ENCODE measurements at regions of chr17 and their contacts with region 1.

Region 1: DNA sequence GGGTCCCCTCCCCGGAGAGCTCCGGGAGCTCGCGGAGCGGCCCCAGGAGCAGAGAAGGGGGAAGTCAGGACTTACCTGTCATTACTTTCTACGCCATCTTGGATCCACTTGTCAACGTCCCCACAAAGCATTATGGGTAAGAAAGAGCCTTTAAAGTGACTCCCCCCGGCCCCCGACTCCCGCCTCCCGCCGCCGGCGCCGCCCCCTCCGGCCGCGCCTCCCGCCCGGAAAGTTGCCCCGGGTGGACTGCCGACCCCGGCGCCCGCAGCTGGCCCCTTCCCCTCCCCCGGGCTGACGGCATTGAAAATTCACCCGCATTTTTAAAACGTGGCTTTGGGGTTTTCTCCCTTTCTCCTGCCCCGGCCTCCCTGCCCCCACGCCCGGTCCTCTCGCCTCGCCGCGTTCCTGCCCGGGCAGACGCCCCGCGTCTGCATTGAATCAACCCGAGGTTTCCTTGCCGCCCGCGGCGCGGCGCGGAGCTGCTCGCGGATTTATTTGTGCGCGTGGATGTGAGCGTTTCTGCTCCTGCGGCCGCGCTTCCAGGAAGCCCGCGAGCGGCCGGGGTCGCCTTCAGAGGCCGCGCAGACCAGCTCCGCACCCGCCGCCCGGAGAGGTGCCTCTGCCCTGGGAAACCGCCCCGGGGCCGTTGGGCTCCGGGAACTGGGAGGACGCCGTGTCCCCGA is at the start of gene HELZ:
- DNase-seq: peak; percentile 44 to 90 (median 67)
- ATAC-seq: peak; percentile 67
- H3K4me3 ChIP-seq: peak within 1 kb of the TSS; percentile 78 to 84
- H3K4me3 Mint-ChIP-seq: peak within 1 kb of the TSS; percentile 90
- H3K27ac ChIP-seq: peak within 1 kb of the TSS; percentile 71 to 77
- H3K27ac Mint-ChIP-seq: peak within 1 kb of the TSS; percentile 89
- H3K4me1 ChIP-seq: peaks cover 35% of the 10 kb centered on the region
- H3K4me1 Mint-ChIP-seq: peaks cover 52% of the 10 kb centered on the region
- H3K27me3 ChIP-seq: peaks cover 0 to 2% of the 10 kb centered on the region in 2 experiments
- H3K27me3 Mint-ChIP-seq: no peaks in the 10 kb centered on the region
- CTCF ChIP-seq: no peak
- total RNA-seq, gene HELZ: 108 to 116 TPM

Region 2: DNA sequence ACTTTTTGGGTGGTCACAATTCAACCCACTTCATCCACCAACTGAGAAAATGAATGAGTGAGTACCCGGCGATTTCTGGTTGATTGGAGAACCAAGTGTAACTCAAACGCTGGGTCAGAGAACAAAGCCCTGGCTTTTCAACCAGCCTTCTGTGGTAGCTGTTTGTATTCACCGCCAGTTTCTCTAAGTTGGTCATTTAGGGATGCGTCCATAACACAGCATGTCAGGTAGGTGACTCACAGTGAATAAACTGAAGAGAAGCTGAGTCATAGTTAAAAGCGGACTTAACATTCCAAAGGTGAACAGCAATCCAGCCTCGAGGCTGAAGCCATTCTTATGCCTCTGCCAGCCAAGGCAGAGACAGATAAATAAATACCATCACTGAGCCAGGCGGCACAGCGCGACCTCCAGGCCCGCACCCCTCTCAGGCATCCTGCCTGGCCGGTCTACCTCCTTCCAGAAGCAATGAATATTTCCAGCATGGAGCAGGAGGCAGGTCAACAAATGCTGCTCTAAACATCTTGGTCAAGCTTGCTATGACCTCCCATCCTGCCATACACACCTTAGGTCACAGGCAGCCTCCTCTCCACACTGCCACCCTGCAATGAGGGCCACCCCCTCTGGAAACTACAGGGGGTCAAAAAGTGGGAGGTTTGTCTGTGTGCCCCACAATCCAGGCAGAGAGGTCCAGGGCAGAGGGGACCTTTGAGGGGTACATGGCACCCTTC is 293.1 kb before region 1 on chr17:
- CTCF ChIA-PET with region 1: no interaction called
- POLR2A ChIA-PET with region 1: no interaction called
- intact Hi-C with region 1: no loop called
- DNase-seq: no peak
- ATAC-seq: no peak
- H3K4me3 ChIP-seq: no peak overlapping the region
- H3K4me3 Mint-ChIP-seq: no peak overlapping the region
- H3K27ac ChIP-seq: no peak overlapping the region
- H3K27ac Mint-ChIP-seq: no peak overlapping the region
- H3K4me1 ChIP-seq: no peaks in the 10 kb centered on the region
- H3K4me1 Mint-ChIP-seq: no peaks in the 10 kb centered on the region
- H3K27me3 ChIP-seq: no peaks in the 10 kb centered on the region
- H3K27me3 Mint-ChIP-seq: peaks cover 17% of the 10 kb centered on the region
- CTCF ChIP-seq: no peak

Region 3: GRCh38 chr17:67121316-67121887 is 123.8 kb before region 1 on chr17:
- CTCF ChIA-PET with region 1: no interaction called
- POLR2A ChIA-PET with region 1: no interaction called
- intact Hi-C with region 1: no loop called
- DNase-seq: no peak
- ATAC-seq: no peak
- H3K4me3 ChIP-seq: no peak overlapping the region
- H3K4me3 Mint-ChIP-seq: no peak overlapping the region
- H3K27ac ChIP-seq: no peak overlapping the region
- H3K27ac Mint-ChIP-seq: no peak overlapping the region
- H3K4me1 ChIP-seq: no peaks in the 10 kb centered on the region
- H3K4me1 Mint-ChIP-seq: peaks cover 6% of the 10 kb centered on the region
- H3K27me3 ChIP-seq: no peaks in the 10 kb centered on the region
- H3K27me3 Mint-ChIP-seq: no peaks in the 10 kb centered on the region
- CTCF ChIP-seq: no peak

Region 4: DNA sequence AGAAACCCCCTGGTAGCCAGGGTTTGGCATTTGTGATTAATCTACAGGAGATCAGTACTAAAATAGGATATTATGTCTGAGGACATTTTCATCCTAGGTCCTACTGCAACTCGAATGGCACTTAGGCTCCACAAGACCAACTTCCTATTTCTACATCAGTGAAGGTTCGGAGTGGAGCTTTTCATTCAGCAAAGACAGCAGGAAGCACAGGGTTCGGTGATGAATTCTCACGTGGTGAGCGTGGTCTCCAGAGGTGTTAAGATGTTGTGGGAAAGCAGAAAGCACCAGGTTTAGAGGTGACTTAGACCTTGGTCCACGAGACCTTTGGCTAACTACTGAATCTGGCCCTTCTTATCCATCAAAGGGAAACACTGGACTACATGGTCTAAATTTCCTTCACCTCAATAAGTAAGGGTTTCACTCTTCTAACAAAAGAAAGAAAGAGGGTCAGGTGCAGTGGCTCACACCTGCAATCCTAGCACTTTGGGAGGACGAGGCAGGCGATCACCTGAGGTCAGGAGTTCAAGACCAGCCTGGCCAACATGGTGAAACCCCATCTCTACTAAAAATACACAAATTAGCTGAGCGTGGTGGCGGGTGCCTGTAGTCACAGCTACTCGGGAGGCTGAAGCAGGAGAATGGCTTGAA is 13.7 kb after region 1 on chr17:
- CTCF ChIA-PET with region 1: interaction called, 3 read pairs
- POLR2A ChIA-PET with region 1: interaction called, 4 read pairs
- intact Hi-C with region 1: loop called in 1 of 2 experiments (anchors 2 kb)
- DNase-seq: peak in 8 of 9 experiments; percentile 21 to 84 (median 52)
- ATAC-seq: peak; percentile 53
- H3K4me3 ChIP-seq: peak overlapping the region in 1 of 2 experiments; percentile 19
- H3K4me3 Mint-ChIP-seq: peak overlapping the region; percentile 64
- H3K27ac ChIP-seq: peak overlapping the region in 1 of 2 experiments; percentile 62
- H3K27ac Mint-ChIP-seq: peak overlapping the region; percentile 77
- H3K4me1 ChIP-seq: peaks cover 16% of the 10 kb centered on the region
- H3K4me1 Mint-ChIP-seq: peaks cover 20% of the 10 kb centered on the region
- H3K27me3 ChIP-seq: no peaks in the 10 kb centered on the region
- H3K27me3 Mint-ChIP-seq: no peaks in the 10 kb centered on the region
- CTCF ChIP-seq: no peak

Region 5: GRCh38 chr17:67359960-67360773 is 115.0 kb after region 1 on chr17:
- CTCF ChIA-PET with region 1: no interaction called
- POLR2A ChIA-PET with region 1: no interaction called
- intact Hi-C with region 1: loop called (anchors 5 to 10 kb)
- DNase-seq: peak in 6 of 9 experiments; percentile 26 to 81 (median 62)
- ATAC-seq: peak; percentile 95
- H3K4me3 ChIP-seq: no peak overlapping the region
- H3K4me3 Mint-ChIP-seq: peak overlapping the region; percentile 0
- H3K27ac ChIP-seq: peak overlapping the region; percentile 42 to 46
- H3K27ac Mint-ChIP-seq: peak overlapping the region; percentile 83
- H3K4me1 ChIP-seq: peaks cover 61% of the 10 kb centered on the region
- H3K4me1 Mint-ChIP-seq: peaks cover 65% of the 10 kb centered on the region
- H3K27me3 ChIP-seq: no peaks in the 10 kb centered on the region
- H3K27me3 Mint-ChIP-seq: no peaks in the 10 kb centered on the region
- CTCF ChIP-seq: peak; percentile 63

Region 6: GRCh38 chr17:67441052-67441927 is 196.1 kb after region 1 on chr17:
- CTCF ChIA-PET with region 1: no interaction called
- POLR2A ChIA-PET with region 1: no interaction called
- intact Hi-C with region 1: loop called in 1 of 2 experiments (anchors 5 kb)
- DNase-seq: peak; percentile 61 to 95 (median 79)
- ATAC-seq: peak; percentile 82
- H3K4me3 ChIP-seq: peak overlapping the region; percentile 38 to 47
- H3K4me3 Mint-ChIP-seq: peak overlapping the region; percentile 71
- H3K27ac ChIP-seq: peak overlapping the region; percentile 84 to 98
- H3K27ac Mint-ChIP-seq: peak overlapping the region; percentile 95
- H3K4me1 ChIP-seq: peaks cover 86% of the 10 kb centered on the region
- H3K4me1 Mint-ChIP-seq: peaks cover 83% of the 10 kb centered on the region
- H3K27me3 ChIP-seq: no peaks in the 10 kb centered on the region
- H3K27me3 Mint-ChIP-seq: no peaks in the 10 kb centered on the region
- CTCF ChIP-seq: no peak

Region 7: GRCh38 chr17:67824735-67825626 is 579.8 kb after region 1 on chr17 and contains the start of gene BPTF:
- CTCF ChIA-PET with region 1: no interaction called
- POLR2A ChIA-PET with region 1: no interaction called
- intact Hi-C with region 1: loop called in 1 of 2 experiments (anchors 5 kb)
- DNase-seq: peak; percentile 82 to 97 (median 92)
- ATAC-seq: peak; percentile 69
- H3K4me3 ChIP-seq: peak within 1 kb of the TSS; percentile 75 to 85
- H3K4me3 Mint-ChIP-seq: peak within 1 kb of the TSS; percentile 99
- H3K27ac ChIP-seq: peak within 1 kb of the TSS; percentile 68 to 80
- H3K27ac Mint-ChIP-seq: peak within 1 kb of the TSS; percentile 100
- H3K4me1 ChIP-seq: peaks cover 33% of the 10 kb centered on the region
- H3K4me1 Mint-ChIP-seq: peaks cover 31% of the 10 kb centered on the region
- H3K27me3 ChIP-seq: no peaks in the 10 kb centered on the region
- H3K27me3 Mint-ChIP-seq: peaks cover 4% of the 10 kb centered on the region
- CTCF ChIP-seq: peak; percentile 94
- total RNA-seq, gene BPTF: 97.8 to 107 TPM

Region 8: GRCh38 chr17:68512247-68512982 is 1267.2 kb after region 1 on chr17 and contains the start of gene PRKAR1A:
- CTCF ChIA-PET with region 1: no interaction called
- POLR2A ChIA-PET with region 1: no interaction called
- intact Hi-C with region 1: loop called in 1 of 2 experiments (anchors 2 kb)
- DNase-seq: peak; percentile 88 to 98 (median 94)
- ATAC-seq: peak; percentile 79
- H3K4me3 ChIP-seq: peak within 1 kb of the TSS; percentile 85 to 87
- H3K4me3 Mint-ChIP-seq: peak within 1 kb of the TSS; percentile 100
- H3K27ac ChIP-seq: peak within 1 kb of the TSS; percentile 99
- H3K27ac Mint-ChIP-seq: peak within 1 kb of the TSS; percentile 100
- H3K4me1 ChIP-seq: peaks cover 22% of the 10 kb centered on the region
- H3K4me1 Mint-ChIP-seq: peaks cover 54% of the 10 kb centered on the region
- H3K27me3 ChIP-seq: no peaks in the 10 kb centered on the region
- H3K27me3 Mint-ChIP-seq: no peaks in the 10 kb centered on the region
- CTCF ChIP-seq: no peak
- total RNA-seq, gene PRKAR1A: 61.2 to 63.5 TPM